ENCODE measurements at regions of chr2 and their contacts with region 1.

Region 1: DNA sequence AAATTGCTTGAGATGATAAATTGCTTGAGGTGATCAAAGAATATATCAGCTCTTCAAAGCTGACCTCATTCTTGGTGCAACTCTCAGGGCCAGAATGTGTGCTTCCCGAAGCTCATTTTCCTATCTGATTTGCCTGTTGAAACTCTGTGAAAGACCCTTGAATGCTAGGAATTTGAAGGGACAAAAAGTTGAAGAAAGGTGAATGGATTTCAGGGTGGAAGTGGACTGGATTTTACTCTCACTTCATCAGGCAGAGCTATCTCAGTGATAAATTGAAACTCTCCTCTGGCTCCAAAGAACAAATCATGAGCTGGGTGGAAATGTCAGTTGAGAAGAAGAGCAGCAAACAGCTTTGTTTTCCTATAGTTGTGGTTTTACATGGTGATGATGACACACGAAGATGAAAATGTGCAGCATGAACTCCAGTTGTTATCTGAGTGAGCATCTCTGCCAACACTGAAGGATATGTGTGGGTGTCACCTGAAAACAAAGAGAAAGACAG is 34.4 kb downstream of the CD28 start:
- DNase-seq: peak; percentile 62
- H3K4me3 Mint-ChIP-seq: peak overlapping the region; percentile 62
- H3K27ac Mint-ChIP-seq: peak overlapping the region; percentile 99
- H3K4me1 Mint-ChIP-seq: peaks cover 81% of the 10 kb centered on the region
- H3K27me3 Mint-ChIP-seq: no peaks in the 10 kb centered on the region

Region 2: GRCh38 chr2:203730076-203730729 is 10.6 kb before region 1 on chr2:
- intact Hi-C with region 1: loop called (anchors 1 kb)
- DNase-seq: no peak
- H3K4me3 Mint-ChIP-seq: peak overlapping the region; percentile 1
- H3K27ac Mint-ChIP-seq: peak overlapping the region; percentile 83
- H3K4me1 Mint-ChIP-seq: peaks cover 75% of the 10 kb centered on the region
- H3K27me3 Mint-ChIP-seq: no peaks in the 10 kb centered on the region

Region 3: GRCh38 chr2:203804070-203804469 is 63.2 kb after region 1 on chr2:
- intact Hi-C with region 1: loop called (anchors 1 kb)
- DNase-seq: peak; percentile 36
- H3K4me3 Mint-ChIP-seq: no peak overlapping the region
- H3K27ac Mint-ChIP-seq: peak overlapping the region; percentile 61
- H3K4me1 Mint-ChIP-seq: peaks cover 68% of the 10 kb centered on the region
- H3K27me3 Mint-ChIP-seq: no peaks in the 10 kb centered on the region

Region 4: DNA sequence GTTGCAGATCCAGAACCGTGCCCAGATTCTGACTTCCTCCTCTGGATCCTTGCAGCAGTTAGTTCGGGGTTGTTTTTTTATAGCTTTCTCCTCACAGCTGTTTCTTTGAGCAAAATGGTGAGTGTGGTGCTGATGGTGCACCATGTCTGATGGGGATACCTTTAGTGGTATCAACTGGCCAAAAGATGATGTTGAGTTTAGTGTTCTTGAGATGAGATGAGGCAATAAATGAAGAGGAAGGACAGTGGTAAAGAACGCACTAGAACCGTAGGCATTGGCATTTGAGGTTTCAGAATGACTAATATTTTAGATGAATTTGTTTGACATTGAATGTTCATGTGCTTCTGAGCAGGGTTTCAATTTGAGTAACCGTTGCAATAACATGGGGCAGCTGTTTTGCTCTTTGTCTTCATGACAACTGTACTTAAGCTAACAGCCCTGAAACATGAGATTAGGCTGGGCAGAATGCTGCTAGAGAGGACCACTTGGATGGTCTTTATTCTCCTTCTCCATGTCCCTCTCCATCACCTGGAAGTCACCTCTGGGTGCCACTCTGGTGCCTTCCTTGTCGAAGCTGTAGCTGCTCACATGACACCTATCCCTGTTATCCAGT is 130.6 kb after region 1 on chr2:
- intact Hi-C with region 1: loop called (anchors 1 kb)
- DNase-seq: peak; percentile 60
- H3K4me3 Mint-ChIP-seq: peak overlapping the region; percentile 96
- H3K27ac Mint-ChIP-seq: peak overlapping the region; percentile 95
- H3K4me1 Mint-ChIP-seq: peaks cover 57% of the 10 kb centered on the region
- H3K27me3 Mint-ChIP-seq: no peaks in the 10 kb centered on the region

Measured in activated T-helper 2 cell treated with anti-CD3 and anti-CD28 coated beads, Interferon-gamma antibody, Interleukin-2, Interleukin-4, amounts not matched to agents 10 μg/mL and 5 μg/mL and 100 μg/mL, durations not matched to agents 14 hours and 24 hours and 36 hours (primary cell).